OCI-LY7 (cell line): ENCODE measurements at regions of chr17 and their contacts with region 1.

Region 1: DNA sequence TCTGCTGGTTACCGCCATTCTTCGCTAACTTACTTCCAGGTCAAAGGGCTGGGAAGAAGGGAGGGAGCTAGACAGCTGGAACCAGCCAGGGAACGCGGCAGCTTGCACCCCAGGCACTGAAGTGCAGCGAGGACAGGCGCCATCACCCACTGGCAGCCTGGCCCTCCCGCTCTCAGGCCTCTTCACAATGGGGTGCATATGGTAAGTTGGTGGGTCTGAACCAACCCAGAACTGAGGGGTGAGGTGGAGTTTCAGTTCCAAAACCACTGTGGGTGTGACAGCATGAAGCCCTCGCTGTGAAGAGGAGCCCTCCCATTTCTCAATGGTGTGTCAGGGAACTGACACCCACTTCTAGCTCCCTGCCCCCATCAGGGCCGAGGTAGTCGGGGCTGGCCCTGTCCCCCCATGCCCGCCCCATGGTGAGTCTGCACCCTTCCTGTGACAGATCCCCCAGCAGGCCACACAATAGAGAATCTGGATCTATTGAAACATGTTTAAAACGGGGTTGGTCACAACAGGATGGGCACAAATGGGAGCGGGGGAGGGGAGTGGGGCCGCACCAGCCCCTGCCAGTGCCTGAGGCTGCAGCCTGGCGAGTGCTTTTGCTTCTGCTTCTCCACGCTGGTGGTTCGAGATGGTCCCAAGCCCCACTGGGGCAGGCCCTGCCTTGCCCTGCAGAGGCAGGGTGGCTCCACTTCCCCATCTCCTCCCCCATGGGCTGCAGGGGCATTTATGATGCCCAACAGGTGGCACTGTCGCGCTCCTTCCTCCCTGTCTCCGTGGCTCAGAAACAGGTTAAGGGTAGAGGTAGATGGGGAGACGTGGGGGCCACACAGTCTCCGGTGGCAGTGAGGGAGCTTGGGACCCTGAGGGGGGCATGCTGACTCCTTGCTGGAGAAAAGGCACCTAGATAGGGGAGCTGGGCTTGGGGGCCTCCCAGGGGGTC is 2.3 kb downstream of the LIMD2 start:
- DNase-seq: peak; percentile 91
- H3K4me3 ChIP-seq: peak overlapping the region; percentile 89
- H3K27ac ChIP-seq: peak overlapping the region; percentile 95
- H3K4me1 ChIP-seq: peaks cover 61% of the 10 kb centered on the region
- CTCF ChIP-seq: peak; percentile 85

Region 2: GRCh38 chr17:63425482-63425881 is 272.1 kb before region 1 on chr17:
- CTCF ChIA-PET with region 1: no interaction called
- POLR2A ChIA-PET with region 1: no interaction called
- intact Hi-C with region 1: loop called (anchors 5 kb)
- DNase-seq: peak; percentile 81
- H3K4me3 ChIP-seq: no peak overlapping the region
- H3K27ac ChIP-seq: no peak overlapping the region
- H3K4me1 ChIP-seq: peaks cover 14% of the 10 kb centered on the region
- CTCF ChIP-seq: peak; percentile 98

Region 3: DNA sequence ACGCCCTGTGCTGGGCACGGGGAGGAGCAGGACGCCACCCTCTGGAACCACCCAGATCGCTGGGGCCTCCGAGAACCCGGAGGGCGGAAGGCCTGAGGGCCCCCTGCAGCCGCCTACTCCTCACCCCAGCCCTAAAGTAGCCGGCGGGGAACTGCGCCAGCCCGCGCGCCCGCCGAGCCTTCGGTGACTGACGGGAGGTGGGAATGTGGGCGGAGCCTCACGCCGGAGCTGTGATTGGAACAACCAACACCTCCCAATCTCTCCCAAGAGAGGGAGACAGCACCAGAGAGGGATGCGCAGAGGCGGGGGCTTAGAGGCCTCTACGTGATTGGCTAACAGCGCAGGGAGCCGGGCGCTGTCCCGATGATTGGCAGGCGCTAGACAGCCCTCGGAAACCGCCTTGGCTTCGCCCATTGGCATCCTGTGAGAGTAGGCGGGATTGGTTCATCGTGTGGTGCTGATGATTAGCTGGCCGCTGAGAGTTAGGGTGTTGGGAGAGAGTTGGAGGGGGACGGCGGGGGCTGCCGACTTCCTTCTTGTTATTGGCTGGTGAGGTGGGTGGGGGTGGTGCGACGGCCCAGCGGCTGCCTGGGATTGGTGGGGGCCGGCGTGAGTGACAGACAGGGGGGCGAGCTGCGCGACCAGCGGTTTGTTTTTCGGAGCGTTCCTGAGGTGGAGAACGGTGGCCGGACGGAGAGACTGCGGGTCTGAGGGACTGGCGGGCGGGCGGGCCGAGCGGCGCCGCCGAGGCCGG is 75.7 kb before region 1 on chr17 and contains the start of gene MAP3K3:
- CTCF ChIA-PET with region 1: no interaction called
- POLR2A ChIA-PET with region 1: interaction called, 5 read pairs
- intact Hi-C with region 1: loop called (anchors 1 kb)
- DNase-seq: peak; percentile 100
- H3K4me3 ChIP-seq: peak within 1 kb of the TSS; percentile 75
- H3K27ac ChIP-seq: peak within 1 kb of the TSS; percentile 43
- H3K4me1 ChIP-seq: peaks cover 26% of the 10 kb centered on the region
- CTCF ChIP-seq: peak; percentile 52; the same call in 1 of the 2 replicates
- total RNA-seq, gene MAP3K3: 16.5 and 26.0 TPM in 2 replicates

Region 4: DNA sequence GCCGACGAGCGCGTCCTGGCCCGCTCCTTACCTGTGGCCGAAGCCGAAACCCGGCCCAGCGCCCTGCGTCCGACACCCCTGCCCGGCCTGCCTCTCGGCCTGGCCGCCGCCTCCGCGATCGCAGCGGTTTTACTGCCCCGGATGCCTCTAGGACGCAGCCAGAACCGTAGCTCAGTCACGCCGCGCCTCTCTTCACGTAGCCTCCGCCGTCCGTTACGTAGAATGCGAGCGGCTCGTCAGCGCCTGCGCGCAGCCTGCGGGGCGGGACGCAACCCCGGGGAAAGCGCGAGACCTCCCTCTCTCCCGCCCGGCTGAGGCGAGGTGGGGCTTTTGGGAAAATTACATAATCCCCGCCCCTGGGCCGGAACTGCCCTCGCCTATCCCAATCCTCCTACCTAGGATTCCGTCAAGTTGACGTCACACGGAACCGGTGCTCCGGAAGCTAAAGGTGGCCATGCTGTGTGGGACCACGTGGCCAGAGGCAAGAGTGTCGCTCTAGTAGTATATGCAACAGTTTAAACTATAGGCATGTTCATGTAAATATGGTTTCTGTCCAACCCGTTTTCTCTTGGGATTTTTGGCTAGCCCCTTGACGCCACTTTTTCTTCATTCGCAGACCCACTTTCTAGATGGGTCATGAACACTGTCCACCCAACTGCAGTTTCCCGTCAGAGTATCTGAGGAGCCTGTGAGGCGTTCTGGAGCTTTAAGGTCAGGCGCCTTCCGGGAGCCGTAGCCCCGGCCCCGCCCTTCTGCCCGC is 75.9 kb after region 1 on chr17 and contains the start of gene CCDC47:
- CTCF ChIA-PET with region 1: no interaction called
- POLR2A ChIA-PET with region 1: interaction called, 4 read pairs
- intact Hi-C with region 1: loop called (anchors 1 kb)
- DNase-seq: peak; percentile 99
- H3K4me3 ChIP-seq: peak within 1 kb of the TSS; percentile 90
- H3K27ac ChIP-seq: peak within 1 kb of the TSS; percentile 93
- H3K4me1 ChIP-seq: peaks cover 31% of the 10 kb centered on the region
- CTCF ChIP-seq: no peak
- total RNA-seq, gene CCDC47: 27.5 and 37.6 TPM in 2 replicates

Region 5: DNA sequence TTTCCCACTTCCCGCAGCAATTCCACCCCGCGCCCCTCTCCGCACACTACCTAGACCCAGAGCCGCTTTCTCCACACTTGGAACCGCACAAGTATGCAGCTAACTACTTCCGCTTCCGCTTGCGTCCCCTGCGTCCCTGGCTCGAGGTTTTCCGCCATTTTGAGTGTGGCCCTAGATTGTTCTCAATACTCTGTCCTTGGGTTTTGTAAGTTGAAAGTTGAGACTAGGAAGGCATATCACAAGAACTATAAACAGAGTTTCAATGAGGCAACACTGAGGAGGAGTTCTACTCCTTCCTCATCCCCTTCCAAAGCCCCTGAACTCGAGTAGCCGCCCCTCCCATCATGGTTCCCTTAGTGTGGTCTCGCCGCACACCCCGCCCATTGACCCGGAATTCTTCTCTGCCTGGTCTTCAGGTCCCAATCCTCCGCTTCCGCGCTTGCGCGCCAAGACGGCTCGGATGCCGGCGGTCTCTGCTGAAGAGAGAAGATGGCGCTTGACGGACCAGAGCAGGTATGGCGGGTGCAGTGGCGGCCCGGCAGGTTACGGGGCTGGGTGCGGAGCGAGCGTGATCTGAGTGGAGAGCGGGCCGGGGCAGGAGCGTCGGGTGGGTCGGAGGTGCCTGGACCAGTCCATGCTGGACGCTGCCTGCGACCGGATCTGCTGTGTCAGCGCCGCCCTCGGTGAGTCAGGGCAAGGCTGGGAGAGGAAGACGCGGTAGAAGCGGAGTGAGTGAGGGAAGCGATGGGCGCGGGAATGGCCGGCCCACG is 129.6 kb after region 1 on chr17 and contains the starts of genes FTSJ3 and PSMC5:
- CTCF ChIA-PET with region 1: no interaction called
- POLR2A ChIA-PET with region 1: interaction called, 4 read pairs
- intact Hi-C with region 1: loop called (anchors 1 kb)
- DNase-seq: peak; percentile 97
- H3K4me3 ChIP-seq: peak within 1 kb of the TSS; percentile 78
- H3K27ac ChIP-seq: peak within 1 kb of the TSS; percentile 67
- H3K4me1 ChIP-seq: peaks cover 23% of the 10 kb centered on the region
- CTCF ChIP-seq: peak; percentile 78
- total RNA-seq, gene FTSJ3: 32.4 and 43.0 TPM in 2 replicates
- total RNA-seq, gene PSMC5: 32.6 and 42.7 TPM in 2 replicates

Region 6: GRCh38 chr17:63931099-63931561 is 233.5 kb after region 1 on chr17:
- CTCF ChIA-PET with region 1: no interaction called
- POLR2A ChIA-PET with region 1: no interaction called
- intact Hi-C with region 1: loop called (anchors 5 kb)
- DNase-seq: peak; percentile 83
- H3K4me3 ChIP-seq: peak overlapping the region; percentile 98
- H3K27ac ChIP-seq: peak overlapping the region; percentile 99
- H3K4me1 ChIP-seq: peaks cover 73% of the 10 kb centered on the region
- CTCF ChIP-seq: no peak

Region 7: GRCh38 chr17:63998050-63998720 is 300.6 kb after region 1 on chr17 and contains the start of gene PRR29:
- CTCF ChIA-PET with region 1: no interaction called
- POLR2A ChIA-PET with region 1: no interaction called
- intact Hi-C with region 1: no loop called
- DNase-seq: peak; percentile 82
- H3K4me3 ChIP-seq: peak within 1 kb of the TSS; percentile 69
- H3K27ac ChIP-seq: no peak within 1 kb of the TSS
- H3K4me1 ChIP-seq: peaks cover 18% of the 10 kb centered on the region
- CTCF ChIP-seq: no peak
- total RNA-seq, gene PRR29: 0.16 TPM in 1 of 2 replicates, not detected in the other